MCF 10A (cell line): ENCODE measurements at regions of chr12 and their contacts with region 1.

Region 1: DNA sequence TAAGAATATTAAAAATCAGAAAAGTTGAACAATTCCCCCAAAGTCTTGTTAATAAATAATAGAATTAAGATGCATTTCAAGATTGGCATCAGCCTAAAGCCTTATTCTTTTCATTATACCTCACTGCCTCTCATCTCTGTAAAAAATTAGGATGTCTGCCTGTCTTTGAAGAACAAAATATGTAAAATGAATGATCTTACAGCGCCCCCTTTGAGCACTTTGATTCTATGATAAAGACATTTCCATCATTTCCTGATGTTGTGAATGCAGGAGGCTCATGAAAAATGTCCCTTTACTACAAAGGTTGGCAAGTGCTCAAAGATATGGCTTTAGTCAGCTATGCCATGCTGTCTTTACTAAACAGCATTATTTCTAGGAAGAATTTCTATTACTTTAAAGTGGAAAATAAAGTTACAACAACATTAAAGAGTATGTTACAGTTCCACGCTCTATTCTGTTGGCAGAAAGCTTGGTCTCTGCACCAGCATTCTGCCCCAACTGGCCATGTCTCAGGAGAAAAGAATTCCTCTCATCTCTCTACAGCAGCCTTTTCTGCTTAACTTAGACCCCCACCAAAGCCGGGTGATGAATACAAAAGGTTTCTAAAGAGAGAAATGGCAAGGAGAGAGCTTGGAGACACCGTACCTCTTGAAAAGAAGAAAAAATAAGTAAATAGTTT is 95.1 kb downstream of the LLPH start:
- DNase-seq: peak; percentile 68
- H3K4me3 Mint-ChIP-seq: no peak overlapping the region
- H3K27ac Mint-ChIP-seq: no peak overlapping the region
- H3K4me1 Mint-ChIP-seq: peaks cover 23% of the 10 kb centered on the region
- H3K27me3 Mint-ChIP-seq: no peaks in the 10 kb centered on the region
- CTCF ChIP-seq: peak; percentile 51

Region 2: DNA sequence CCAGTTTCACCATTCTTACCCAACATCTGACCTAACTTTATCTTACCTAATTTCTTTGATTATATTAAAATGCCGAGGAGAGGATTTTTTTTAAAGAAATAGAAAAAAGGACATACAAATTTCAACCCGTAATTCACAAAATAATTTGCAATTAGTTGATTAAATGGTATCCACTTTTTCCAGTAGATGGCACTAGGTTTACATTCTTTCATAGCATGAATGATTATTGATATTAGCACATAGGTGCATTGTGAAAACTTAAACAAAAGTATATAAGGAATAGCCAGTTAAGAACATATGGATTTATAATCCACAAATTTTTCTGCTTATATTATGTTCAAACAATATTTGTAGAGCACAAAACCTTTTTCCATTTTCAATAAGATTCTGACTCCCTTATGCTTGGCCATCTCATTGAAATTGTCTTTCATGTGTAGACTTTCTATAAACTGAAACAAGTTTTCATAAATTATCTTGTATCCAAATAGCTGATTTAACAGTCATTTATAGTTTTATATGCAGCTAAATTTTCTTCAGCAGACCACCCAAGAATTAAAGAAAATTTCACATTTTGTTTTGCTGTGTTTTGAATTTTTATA is 721.6 kb before region 1 on chr12:
- CTCF ChIA-PET with region 1: no interaction called
- POLR2A ChIA-PET with region 1: no interaction called
- intact Hi-C with region 1: loop called (anchors 2 kb)
- DNase-seq: peak; percentile 52
- H3K4me3 Mint-ChIP-seq: no peak overlapping the region
- H3K27ac Mint-ChIP-seq: no peak overlapping the region
- H3K4me1 Mint-ChIP-seq: peaks cover 12% of the 10 kb centered on the region
- H3K27me3 Mint-ChIP-seq: no peaks in the 10 kb centered on the region
- CTCF ChIP-seq: peak; percentile 66

Region 3: DNA sequence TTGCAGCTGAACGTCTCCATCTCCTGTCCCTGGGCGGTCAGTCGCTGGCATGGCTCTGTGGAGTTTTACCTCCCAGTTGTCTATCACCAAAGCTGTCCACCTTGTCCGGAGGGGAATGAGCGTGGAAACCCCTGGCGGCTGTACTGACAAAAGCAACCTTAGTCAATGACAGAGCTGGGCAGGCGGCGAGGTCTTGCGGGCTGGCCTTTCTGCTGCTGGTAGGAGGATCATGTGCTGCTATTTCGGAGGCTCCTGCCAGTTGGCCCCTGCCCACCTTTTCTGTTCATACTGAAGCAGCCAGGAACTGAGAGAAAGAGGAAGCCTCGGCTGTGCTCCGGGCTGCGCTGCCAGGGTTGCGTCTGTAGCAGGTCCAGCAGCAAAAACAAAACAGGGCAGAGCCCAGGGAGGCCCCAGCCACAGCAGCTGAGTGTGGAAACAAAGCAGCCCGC is 153.4 kb before region 1 on chr12:
- CTCF ChIA-PET with region 1: interaction called, 4 read pairs
- POLR2A ChIA-PET with region 1: no interaction called
- intact Hi-C with region 1: loop called (anchors 5 kb)
- DNase-seq: no peak
- H3K4me3 Mint-ChIP-seq: no peak overlapping the region
- H3K27ac Mint-ChIP-seq: peak overlapping the region; percentile 80
- H3K4me1 Mint-ChIP-seq: peaks cover 55% of the 10 kb centered on the region
- H3K27me3 Mint-ChIP-seq: no peaks in the 10 kb centered on the region
- CTCF ChIP-seq: no peak

Region 4: DNA sequence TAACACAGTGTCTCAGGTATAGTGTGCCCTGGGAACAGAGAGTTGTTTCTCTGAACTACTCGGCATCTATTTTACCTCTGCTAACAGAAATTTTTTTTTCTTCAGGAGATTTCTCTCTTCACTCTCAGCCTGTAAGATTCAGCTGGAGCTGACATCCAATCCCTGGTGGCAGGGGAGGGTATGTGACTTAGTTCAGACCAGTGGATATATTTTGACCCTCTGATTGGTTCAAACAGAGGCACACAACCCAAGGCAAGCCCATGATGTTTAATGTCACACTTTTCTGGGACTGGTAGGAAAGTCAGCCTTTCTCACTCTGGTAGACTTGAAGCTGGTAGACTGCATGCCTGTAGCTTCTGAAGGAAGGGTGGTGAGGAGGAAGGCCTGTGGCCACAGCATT is 63.3 kb before region 1 on chr12:
- CTCF ChIA-PET with region 1: interaction called, 3 read pairs
- POLR2A ChIA-PET with region 1: no interaction called
- intact Hi-C with region 1: loop called (anchors 5 kb)
- DNase-seq: no peak
- H3K4me3 Mint-ChIP-seq: no peak overlapping the region
- H3K27ac Mint-ChIP-seq: no peak overlapping the region
- H3K4me1 Mint-ChIP-seq: peaks cover 8% of the 10 kb centered on the region
- H3K27me3 Mint-ChIP-seq: no peaks in the 10 kb centered on the region
- CTCF ChIP-seq: no peak

Region 5: DNA sequence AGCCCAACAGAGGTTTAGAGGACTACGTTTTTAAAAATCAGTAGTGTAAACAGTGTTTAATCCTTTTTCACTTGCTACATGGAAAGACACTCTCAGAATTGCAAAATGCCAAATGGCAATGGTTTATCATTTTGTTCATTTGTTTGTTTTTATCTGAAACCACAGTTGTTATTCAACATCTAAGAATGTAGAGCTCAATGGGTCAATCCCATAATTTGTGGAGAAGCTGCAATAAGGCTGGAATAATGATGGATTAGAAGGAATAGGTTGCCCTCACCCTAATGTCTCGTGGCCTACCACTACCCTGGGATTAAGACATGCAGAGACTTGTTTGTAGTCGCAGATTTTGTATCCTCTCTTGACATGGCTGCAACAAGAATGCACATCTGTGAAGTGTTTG is 20.6 kb before region 1 on chr12:
- CTCF ChIA-PET with region 1: interaction called, 4 read pairs
- POLR2A ChIA-PET with region 1: interaction called, 11 read pairs
- intact Hi-C with region 1: no loop called
- DNase-seq: peak; percentile 26
- H3K4me3 Mint-ChIP-seq: no peak overlapping the region
- H3K27ac Mint-ChIP-seq: peak overlapping the region; percentile 88
- H3K4me1 Mint-ChIP-seq: peaks cover 27% of the 10 kb centered on the region
- H3K27me3 Mint-ChIP-seq: no peaks in the 10 kb centered on the region
- CTCF ChIP-seq: no peak

Region 6: DNA sequence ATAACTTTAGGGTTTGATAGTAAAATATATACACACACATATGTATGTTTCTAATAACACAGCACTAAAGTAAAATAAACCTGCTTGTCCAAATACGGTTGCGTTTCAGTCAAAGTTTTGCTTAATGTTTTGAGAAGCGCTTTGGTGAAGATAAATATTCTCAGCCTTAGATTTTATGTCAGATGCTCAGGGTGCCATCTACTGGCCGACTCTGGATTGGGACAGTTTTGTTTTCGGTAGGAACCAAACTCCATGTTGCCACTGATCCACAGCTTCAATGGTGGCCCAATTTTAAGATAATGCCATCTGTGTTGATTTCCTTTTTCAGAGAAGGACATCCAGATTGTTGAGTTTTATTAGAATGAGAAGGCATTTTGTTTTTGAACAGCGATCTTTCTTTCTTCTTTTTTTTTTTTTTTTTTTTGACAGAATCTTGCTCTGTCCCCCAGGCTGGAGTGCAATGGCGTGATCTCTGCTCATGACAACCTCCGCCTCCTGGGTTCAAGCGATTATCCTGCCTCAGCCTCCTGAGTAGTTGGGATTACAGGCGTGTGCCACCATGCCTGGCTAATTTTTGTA is 52.0 kb after region 1 on chr12:
- CTCF ChIA-PET with region 1: interaction called, 4 read pairs
- POLR2A ChIA-PET with region 1: interaction called, 3 read pairs
- intact Hi-C with region 1: loop called (anchors 5 kb)
- DNase-seq: peak; percentile 79
- H3K4me3 Mint-ChIP-seq: no peak overlapping the region
- H3K27ac Mint-ChIP-seq: no peak overlapping the region
- H3K4me1 Mint-ChIP-seq: peaks cover under 1% of the 10 kb centered on the region
- H3K27me3 Mint-ChIP-seq: no peaks in the 10 kb centered on the region
- CTCF ChIP-seq: peak; percentile 72

Region 7: DNA sequence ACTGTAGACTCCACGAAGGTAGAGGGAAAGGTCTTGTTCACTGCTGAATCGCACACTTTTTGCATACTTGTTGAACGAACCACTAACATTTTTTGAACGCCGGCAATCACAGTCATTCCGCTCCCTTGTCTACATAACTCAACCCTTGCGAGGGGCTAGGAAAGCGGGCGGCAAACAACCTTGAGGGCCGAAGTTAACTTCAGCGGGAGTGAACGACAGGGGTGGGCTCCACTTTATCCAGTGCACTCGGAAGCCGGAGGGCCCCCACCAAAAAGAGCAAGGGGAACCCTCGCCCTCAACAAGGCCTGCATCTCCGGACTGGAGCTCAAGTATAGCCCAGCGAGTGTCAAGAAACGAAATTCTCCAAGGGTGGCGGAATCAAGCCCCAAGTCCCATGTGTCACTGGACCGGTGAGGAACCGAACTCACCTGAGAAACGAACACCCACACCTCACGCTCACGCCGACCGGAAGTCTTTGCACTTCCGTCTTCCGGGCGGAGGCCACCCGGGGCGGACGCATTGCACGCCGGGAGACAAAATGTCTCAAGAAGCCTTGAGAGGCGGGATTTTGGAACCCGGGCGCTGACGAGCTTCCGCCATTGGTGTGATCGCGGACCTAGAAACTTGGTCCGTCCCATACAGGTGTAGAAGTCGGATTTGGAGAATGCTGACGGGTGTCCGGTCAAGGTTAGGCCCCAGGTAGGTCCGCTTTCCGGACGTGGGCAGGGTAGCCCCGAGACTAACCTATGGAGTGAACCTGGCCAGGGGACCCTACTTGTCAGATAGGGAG is 95.0 kb after region 1 on chr12 and contains the start of gene LLPH:
- CTCF ChIA-PET with region 1: no interaction called
- POLR2A ChIA-PET with region 1: no interaction called
- intact Hi-C with region 1: no loop called
- DNase-seq: peak; percentile 93
- H3K4me3 Mint-ChIP-seq: peak within 1 kb of the TSS; percentile 90
- H3K27ac Mint-ChIP-seq: peak within 1 kb of the TSS; percentile 89
- H3K4me1 Mint-ChIP-seq: peaks cover 35% of the 10 kb centered on the region
- H3K27me3 Mint-ChIP-seq: no peaks in the 10 kb centered on the region
- CTCF ChIP-seq: no peak
- total RNA-seq, gene LLPH: 43.8 and 44.3 TPM in 2 replicates